ENCODE measurements at regions of chr2 and their contacts with region 1.

Region 1: DNA sequence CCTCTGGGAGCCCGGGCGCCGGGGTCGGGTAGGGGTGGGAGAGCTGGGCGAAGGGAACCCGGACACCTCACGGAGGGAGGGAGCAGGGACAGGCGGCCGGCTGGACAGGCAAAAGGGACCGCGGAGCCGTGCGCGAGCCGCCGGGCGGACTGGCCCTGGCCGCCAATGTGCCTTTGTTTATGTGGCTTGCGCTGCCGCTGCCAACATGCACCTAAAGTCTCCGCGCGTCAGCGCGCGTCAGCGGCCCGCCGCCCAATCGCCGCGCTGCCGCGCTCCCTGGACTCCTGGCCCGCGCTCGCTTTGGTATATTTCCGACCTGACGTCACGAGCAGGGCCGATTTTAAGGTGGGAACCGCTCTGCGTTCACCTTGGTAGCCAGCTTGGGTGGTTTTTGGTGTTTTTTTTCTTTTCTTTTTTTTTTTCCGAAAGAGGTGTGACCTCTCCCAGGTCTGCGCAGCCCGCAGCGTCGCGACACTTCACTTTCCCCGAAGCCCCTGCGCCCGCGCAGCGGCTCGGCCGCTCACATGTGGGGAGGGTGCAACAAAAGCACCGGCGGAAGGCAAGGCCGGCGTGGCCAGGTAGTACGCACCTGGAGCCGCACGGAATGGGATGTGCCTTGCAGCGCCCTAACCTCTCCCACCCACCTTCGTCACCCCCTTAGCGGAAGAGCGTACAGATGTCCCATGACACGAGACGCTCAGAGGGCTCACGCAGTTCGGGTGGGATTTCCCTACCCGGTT is at the start of gene NR4A2:
- DNase-seq: peak; percentile 92
- H3K4me3 Mint-ChIP-seq: peak within 1 kb of the TSS; percentile 87
- H3K27ac Mint-ChIP-seq: peak within 1 kb of the TSS; percentile 95
- H3K4me1 Mint-ChIP-seq: peaks cover 45% of the 10 kb centered on the region
- H3K27me3 Mint-ChIP-seq: no peaks in the 10 kb centered on the region
- total RNA-seq, gene NR4A2: 29.7 to 32.9 TPM

Region 2: DNA sequence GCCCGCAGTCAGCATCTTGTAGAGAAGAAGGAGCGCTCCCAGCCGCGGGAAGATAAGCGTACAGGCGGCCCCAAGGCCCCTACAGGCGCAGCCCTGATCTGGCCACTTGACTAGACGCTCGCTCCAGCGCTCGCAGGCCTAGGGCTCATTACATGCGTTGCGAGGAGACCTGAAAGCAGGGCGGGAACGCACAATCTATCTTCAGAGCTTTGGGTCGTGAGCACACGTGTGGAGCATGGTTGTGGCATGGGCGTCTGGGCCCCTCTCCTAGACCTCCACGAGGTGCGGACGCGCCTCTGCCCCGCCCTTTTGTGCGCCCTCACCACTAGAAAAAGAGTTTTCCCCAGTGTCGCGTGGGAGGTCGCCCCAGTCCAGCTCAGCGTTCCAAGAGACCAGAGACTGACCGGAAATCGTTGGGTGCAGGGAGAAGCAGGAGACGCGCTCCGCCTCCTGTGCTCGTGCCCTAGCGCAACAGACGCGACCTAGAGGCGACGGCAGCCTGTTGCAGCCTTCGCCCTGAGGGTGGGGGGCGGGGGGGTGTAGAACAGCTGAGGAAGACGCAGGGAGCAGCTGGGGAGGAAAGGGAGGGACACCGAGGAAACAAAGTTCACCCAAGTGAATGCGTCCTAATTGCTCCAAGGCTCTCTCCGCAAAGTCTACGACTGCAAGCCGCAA is 12.8 kb before region 1 on chr2:
- CTCF ChIA-PET with region 1: interaction called, 3 read pairs
- intact Hi-C with region 1: loop called (anchors 1 kb)
- DNase-seq: no peak
- H3K4me3 Mint-ChIP-seq: peak overlapping the region; percentile 49
- H3K27ac Mint-ChIP-seq: no peak overlapping the region
- H3K4me1 Mint-ChIP-seq: peaks cover 36% of the 10 kb centered on the region
- H3K27me3 Mint-ChIP-seq: peaks cover 70% of the 10 kb centered on the region

Region 3: DNA sequence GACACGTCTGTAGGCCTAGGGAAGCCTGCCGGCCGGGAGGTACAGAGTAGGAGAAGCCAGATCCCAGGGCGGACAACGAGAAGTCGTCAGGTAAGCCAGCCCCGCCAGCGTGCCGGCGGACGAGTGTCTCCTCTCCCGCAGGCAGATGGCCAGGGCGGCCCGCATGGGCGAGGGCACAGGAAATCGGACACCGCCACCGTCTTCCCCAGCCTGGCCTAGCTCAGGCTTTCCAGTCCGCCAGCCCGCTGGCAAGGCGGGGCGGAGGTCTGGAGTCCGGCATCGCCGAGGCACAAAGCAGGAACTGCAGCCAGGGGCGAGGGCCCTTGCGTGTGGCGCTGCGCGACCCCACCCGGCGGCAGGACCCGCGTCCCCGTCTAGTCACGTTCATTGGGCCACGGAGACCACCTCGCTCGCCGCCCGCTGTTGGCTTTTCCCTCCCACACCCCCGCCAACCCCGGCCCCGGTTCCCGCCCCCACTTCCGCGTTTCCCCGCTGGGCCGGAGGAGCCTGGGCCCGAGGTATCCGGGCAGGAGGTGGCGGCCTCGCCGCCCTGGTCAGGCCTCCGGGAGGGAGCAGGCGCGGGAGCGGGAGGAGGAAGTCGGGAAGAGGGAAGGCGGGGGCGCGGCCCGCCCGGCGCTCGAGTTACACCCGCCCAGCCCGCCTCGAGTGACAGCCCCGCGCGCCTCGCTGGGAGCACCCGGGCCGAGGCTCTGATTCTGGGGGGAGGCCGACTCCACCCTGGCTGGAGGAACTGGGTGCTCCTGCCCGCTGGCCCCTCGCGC is 103.2 kb after region 1 on chr2 and contains the start of gene GPD2:
- CTCF ChIA-PET with region 1: interaction called, 5 read pairs
- intact Hi-C with region 1: loop called (anchors 1 kb)
- DNase-seq: peak; percentile 56
- H3K4me3 Mint-ChIP-seq: peak within 1 kb of the TSS; percentile 94
- H3K27ac Mint-ChIP-seq: peak within 1 kb of the TSS; percentile 92
- H3K4me1 Mint-ChIP-seq: peaks cover 30% of the 10 kb centered on the region
- H3K27me3 Mint-ChIP-seq: no peaks in the 10 kb centered on the region
- total RNA-seq, gene GPD2: 18.8 to 19.9 TPM

Region 4: GRCh38 chr2:156589381-156590079 is 256.8 kb after region 1 on chr2:
- CTCF ChIA-PET with region 1: interaction called, 44 read pairs
- intact Hi-C with region 1: loop called (anchors 1 kb)
- DNase-seq: peak; percentile 34
- H3K4me3 Mint-ChIP-seq: no peak overlapping the region
- H3K27ac Mint-ChIP-seq: no peak overlapping the region
- H3K4me1 Mint-ChIP-seq: no peaks in the 10 kb centered on the region
- H3K27me3 Mint-ChIP-seq: no peaks in the 10 kb centered on the region

Region 5: DNA sequence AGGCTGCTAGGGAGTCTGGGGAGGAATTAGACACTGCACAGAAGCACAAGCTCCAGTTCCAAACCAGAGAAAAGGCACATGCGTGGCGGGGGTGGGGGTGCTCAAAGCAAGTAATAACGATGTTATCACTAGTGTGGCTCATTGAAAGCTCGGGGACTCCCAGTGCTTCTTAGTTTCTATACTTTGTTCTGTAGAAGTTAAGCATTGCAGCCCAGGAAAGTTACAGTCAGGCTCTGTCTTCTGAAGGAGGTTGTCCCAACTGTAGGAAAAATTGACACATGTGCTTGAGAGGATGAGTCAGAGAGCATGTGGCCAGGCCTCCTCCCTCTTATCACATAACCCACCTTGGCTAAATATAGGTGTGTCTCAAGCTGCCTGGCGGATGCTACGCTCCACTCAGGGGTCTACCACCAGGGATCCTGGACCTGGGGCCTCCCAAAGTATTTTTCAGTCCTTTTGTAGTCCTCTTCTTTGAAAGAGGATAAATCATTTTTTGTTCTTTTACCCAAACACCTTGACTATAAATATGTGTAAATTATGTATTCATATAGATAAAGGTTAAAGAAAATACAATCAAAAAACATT is 928.6 kb after region 1 on chr2:
- CTCF ChIA-PET with region 1: no interaction called
- intact Hi-C with region 1: loop called (anchors 5 kb)
- DNase-seq: peak; percentile 83
- H3K4me3 Mint-ChIP-seq: no peak overlapping the region
- H3K27ac Mint-ChIP-seq: peak overlapping the region; percentile 2
- H3K4me1 Mint-ChIP-seq: peaks cover 25% of the 10 kb centered on the region
- H3K27me3 Mint-ChIP-seq: peaks cover 11% of the 10 kb centered on the region

Measured in activated naive CD4-positive, alpha-beta T cell treated with anti-CD3 and anti-CD28 coated beads for 36 hours (primary cell).